ENCODE measurements at regions of chr18 and their contacts with region 1.

Region 1: GRCh38 chr18:56615738-56616520 is 22.5 kb downstream of the TXNL1 start:
- DNase-seq: no peak
- ATAC-seq: no peak
- H3K4me3 ChIP-seq: no peak overlapping the region
- H3K27ac ChIP-seq: no peak overlapping the region
- H3K4me1 ChIP-seq: no peaks in the 10 kb centered on the region
- H3K27me3 ChIP-seq: no peaks in the 10 kb centered on the region
- CTCF ChIP-seq: no peak
- POLR2A ChIP-seq: no peak

Region 2: DNA sequence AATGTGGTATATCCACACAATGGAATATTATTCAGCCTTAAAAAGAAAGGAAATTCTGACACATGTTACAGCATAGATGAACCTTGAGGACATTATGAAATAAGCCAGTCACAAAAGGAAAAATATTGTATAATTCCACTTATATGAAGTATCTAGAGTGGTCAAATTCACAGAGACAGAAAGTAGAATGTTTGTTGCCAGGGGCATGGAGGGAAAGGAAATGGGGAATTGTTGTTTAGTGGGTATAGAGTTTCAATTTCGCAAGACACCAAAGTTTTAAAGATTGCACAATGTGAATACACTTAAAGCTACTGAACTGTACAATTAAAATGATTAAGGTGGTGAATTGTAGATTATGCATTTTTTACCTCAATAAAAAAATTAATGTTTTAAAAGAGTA is 70.5 kb before region 1 on chr18:
- intact Hi-C with region 1: no loop called
- DNase-seq: no peak
- ATAC-seq: no peak
- H3K4me3 ChIP-seq: no peak overlapping the region
- H3K27ac ChIP-seq: no peak overlapping the region
- H3K4me1 ChIP-seq: peaks cover 0 to 21% (median 0%) of the 10 kb centered on the region in 12 donors
- H3K27me3 ChIP-seq: no peaks in the 10 kb centered on the region
- CTCF ChIP-seq: no peak
- POLR2A ChIP-seq: no peak

Region 3: GRCh38 chr18:56696966-56697365 is 81.0 kb after region 1 on chr18:
- intact Hi-C with region 1: loop called in 1 of 10 experiments (anchors 10 kb)
- DNase-seq: no peak
- ATAC-seq: no peak
- H3K4me3 ChIP-seq: no peak overlapping the region
- H3K27ac ChIP-seq: no peak overlapping the region
- H3K4me1 ChIP-seq: no peaks in the 10 kb centered on the region
- H3K27me3 ChIP-seq: no peaks in the 10 kb centered on the region
- CTCF ChIP-seq: no peak
- POLR2A ChIP-seq: no peak

Region 4: DNA sequence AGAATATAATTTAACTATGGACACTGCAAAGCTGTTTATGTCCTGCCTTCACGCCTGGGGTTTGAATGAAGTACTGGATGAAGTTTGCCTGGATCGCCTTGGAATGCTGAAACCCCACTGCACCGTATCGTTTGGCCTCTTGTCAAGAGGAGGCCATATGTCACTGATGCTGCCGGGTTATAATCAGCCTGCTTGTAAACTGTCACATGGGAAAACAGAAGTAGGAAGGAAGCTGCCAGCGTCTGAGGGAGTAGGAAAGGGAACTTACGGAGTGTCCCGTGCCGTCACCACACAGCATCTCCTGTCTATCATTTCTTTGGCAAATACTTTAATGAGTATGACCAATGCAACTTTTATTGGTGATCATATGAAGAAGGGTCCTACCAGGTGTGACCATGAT is 141.0 kb after region 1 on chr18:
- intact Hi-C with region 1: no loop called
- DNase-seq: peak in 2 of 5 donors; percentile 9 to 34
- ATAC-seq: peak in 3 of 4 donors; percentile 43 to 71 (median 54)
- H3K4me3 ChIP-seq: no peak overlapping the region
- H3K27ac ChIP-seq: no peak overlapping the region
- H3K4me1 ChIP-seq: peaks cover 0 to 11% (median 4%) of the 10 kb centered on the region in 12 donors
- H3K27me3 ChIP-seq: no peaks in the 10 kb centered on the region
- CTCF ChIP-seq: no peak
- POLR2A ChIP-seq: no peak